K562 (cell line): ENCODE measurements at regions of chr12 and their contacts with region 1.

Region 1: DNA sequence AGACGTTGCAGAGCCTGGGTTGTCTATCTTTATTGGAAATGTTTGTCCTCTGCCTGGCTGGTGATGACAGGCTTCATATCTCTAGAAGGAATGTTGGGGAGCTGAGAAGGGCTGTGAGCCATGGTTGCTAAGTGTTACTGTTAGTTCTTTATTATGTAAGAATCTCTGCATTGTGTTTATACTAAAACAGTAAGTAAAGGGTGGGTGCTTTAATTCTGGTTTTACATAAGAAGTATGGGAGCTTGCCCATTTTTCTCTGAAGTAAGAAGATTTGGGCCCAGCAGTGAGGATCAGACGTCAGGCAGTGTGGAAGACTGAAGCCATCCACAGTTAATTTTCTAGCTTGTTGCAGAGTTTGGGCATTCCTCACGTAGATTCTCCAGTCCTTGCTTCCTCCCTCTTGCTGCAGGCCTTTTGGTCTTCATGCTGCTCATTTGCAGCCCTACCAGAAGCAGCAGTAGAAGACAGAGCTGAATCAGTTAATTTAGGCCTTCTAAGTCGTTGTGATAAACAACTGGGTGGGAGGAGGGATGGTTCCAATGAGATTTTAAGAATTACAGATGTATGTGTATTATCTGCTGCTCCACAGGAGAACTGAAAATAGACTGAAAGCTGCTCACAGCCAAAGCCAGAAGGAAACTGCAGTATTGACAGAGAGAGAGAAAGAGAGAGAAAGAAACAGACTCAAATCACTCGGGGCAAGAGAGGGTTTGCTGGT is 21.4 kb downstream of the WNT5B start:
- DNase-seq: no peak
- ATAC-seq: no peak; the same call in 2 of the 3 replicates
- H3K4me3 ChIP-seq: no peak overlapping the region
- H3K27ac ChIP-seq: no peak overlapping the region
- H3K4me1 ChIP-seq: peaks cover 21 to 39% of the 10 kb centered on the region in 2 experiments
- H3K27me3 ChIP-seq: no peaks in the 10 kb centered on the region
- CTCF ChIP-seq: no peak
- EP300 ChIP-seq: no peak
- POLR2A ChIP-seq: no peak
- RAD21 ChIP-seq: no peak

Region 2: GRCh38 chr12:1719139-1719538 is 68.7 kb after region 1 on chr12:
- CTCF ChIA-PET with region 1: no interaction called
- POLR2A ChIA-PET with region 1: no interaction called
- in situ Hi-C with region 1: no loop called
- intact Hi-C with region 1: loop called (anchors 5 kb)
- DNase-seq: no peak
- ATAC-seq: no peak
- H3K4me3 ChIP-seq: no peak overlapping the region
- H3K27ac ChIP-seq: no peak overlapping the region
- H3K4me1 ChIP-seq: peaks cover 14 to 38% of the 10 kb centered on the region in 2 experiments; a peak in 4 of 5 replicates
- H3K27me3 ChIP-seq: no peaks in the 10 kb centered on the region
- CTCF ChIP-seq: no peak
- EP300 ChIP-seq: no peak
- POLR2A ChIP-seq: no peak
- RAD21 ChIP-seq: no peak

Region 3: GRCh38 chr12:1927751-1928351 is 277.4 kb after region 1 on chr12:
- CTCF ChIA-PET with region 1: no interaction called
- POLR2A ChIA-PET with region 1: no interaction called
- in situ Hi-C with region 1: no loop called
- intact Hi-C with region 1: no loop called
- DNase-seq: no peak
- ATAC-seq: no peak
- H3K4me3 ChIP-seq: no peak overlapping the region
- H3K27ac ChIP-seq: no peak overlapping the region
- H3K4me1 ChIP-seq: peaks cover 0 to 14% of the 10 kb centered on the region in 2 experiments; a peak in 1 of 5 replicates
- H3K27me3 ChIP-seq: peaks cover 2 to 58% of the 10 kb centered on the region in 2 experiments; a peak in 2 of 5 replicates
- CTCF ChIP-seq: no peak
- EP300 ChIP-seq: no peak
- POLR2A ChIP-seq: no peak
- RAD21 ChIP-seq: no peak

Region 4: GRCh38 chr12:1939801-1940607 is 289.6 kb after region 1 on chr12:
- CTCF ChIA-PET with region 1: no interaction called
- POLR2A ChIA-PET with region 1: no interaction called
- in situ Hi-C with region 1: loop called (anchors 5 kb)
- intact Hi-C with region 1: loop called (anchors 5 kb)
- DNase-seq: peak; percentile 67 to 80 (median 72)
- ATAC-seq: peak; percentile 94
- H3K4me3 ChIP-seq: no peak overlapping the region
- H3K27ac ChIP-seq: no peak overlapping the region
- H3K4me1 ChIP-seq: no peaks in the 10 kb centered on the region
- H3K27me3 ChIP-seq: peaks cover 0 to 1% of the 10 kb centered on the region in 2 experiments; a peak in 1 of 5 replicates
- CTCF ChIP-seq: peak; percentile 76 to 88 (median 84)
- EP300 ChIP-seq: no peak
- POLR2A ChIP-seq: no peak
- RAD21 ChIP-seq: peak; percentile 90 to 93

Region 5: DNA sequence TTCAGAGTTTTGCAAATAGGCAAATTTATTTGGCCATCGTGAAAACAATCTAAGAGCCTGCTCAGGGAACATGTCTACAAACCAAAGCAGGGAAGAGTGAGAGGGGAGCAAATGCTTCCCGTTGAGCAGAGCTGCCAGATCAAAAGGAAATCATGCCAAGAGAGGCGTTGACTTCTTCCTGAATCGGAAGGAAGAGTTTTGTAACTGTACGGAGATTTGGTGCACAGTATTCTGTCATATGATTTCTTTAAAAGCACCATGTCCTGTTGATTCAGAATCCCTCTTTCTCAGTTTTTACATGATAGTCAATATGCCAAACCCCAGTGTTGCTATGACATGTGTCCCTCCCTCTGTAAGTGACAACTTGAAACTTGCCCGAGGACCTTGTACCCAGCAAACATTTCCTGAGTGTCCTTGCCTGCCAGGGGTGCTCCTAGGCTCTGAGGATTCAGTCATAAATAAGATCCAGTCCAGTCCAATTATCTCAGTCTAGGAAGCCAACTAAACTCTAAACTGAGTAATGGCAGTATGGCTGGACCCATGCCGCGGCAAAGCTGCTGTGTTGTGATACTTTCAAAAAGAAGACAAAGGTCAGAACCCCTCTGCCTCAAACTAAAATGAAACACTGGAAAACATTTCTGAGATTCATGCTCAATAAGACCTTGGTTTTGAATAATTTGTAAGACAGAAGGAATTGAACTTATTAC is 844.2 kb after region 1 on chr12:
- CTCF ChIA-PET with region 1: no interaction called
- POLR2A ChIA-PET with region 1: no interaction called
- in situ Hi-C with region 1: no loop called
- intact Hi-C with region 1: no loop called
- DNase-seq: no peak
- ATAC-seq: no peak
- H3K4me3 ChIP-seq: no peak overlapping the region
- H3K27ac ChIP-seq: no peak overlapping the region
- H3K4me1 ChIP-seq: no peaks in the 10 kb centered on the region
- H3K27me3 ChIP-seq: peaks cover 2 to 23% of the 10 kb centered on the region in 2 experiments; a peak in 3 of 5 replicates
- CTCF ChIP-seq: no peak
- EP300 ChIP-seq: no peak
- POLR2A ChIP-seq: no peak
- RAD21 ChIP-seq: no peak